ENCODE measurements at regions of chr21 and their contacts with region 1.

Region 1: GRCh38 chr21:35051287-35051818 is 2.3 kb upstream of the RUNX1 start:
- DNase-seq: peak; percentile 72
- H3K4me3 ChIP-seq: no peak overlapping the region
- H3K27ac ChIP-seq: no peak overlapping the region
- H3K4me1 ChIP-seq: peaks cover 43% of the 10 kb centered on the region
- H3K27me3 ChIP-seq: no peaks in the 10 kb centered on the region
- CTCF ChIP-seq: peak; percentile 71 to 74
- POLR2A ChIP-seq: no peak

Region 2: GRCh38 chr21:34693192-34693810 is 358.1 kb before region 1 on chr21:
- CTCF ChIA-PET with region 1: interaction called, 5 read pairs
- POLR2A ChIA-PET with region 1: no interaction called
- dilution Hi-C with region 1: no loop called
- intact Hi-C with region 1: loop called (anchors 5 kb)
- DNase-seq: peak; percentile 57
- H3K4me3 ChIP-seq: no peak overlapping the region
- H3K27ac ChIP-seq: no peak overlapping the region
- H3K4me1 ChIP-seq: no peaks in the 10 kb centered on the region
- H3K27me3 ChIP-seq: peaks cover 14 to 30% of the 10 kb centered on the region in 2 experiments
- CTCF ChIP-seq: peak; percentile 79 to 81
- POLR2A ChIP-seq: no peak

Region 3: DNA sequence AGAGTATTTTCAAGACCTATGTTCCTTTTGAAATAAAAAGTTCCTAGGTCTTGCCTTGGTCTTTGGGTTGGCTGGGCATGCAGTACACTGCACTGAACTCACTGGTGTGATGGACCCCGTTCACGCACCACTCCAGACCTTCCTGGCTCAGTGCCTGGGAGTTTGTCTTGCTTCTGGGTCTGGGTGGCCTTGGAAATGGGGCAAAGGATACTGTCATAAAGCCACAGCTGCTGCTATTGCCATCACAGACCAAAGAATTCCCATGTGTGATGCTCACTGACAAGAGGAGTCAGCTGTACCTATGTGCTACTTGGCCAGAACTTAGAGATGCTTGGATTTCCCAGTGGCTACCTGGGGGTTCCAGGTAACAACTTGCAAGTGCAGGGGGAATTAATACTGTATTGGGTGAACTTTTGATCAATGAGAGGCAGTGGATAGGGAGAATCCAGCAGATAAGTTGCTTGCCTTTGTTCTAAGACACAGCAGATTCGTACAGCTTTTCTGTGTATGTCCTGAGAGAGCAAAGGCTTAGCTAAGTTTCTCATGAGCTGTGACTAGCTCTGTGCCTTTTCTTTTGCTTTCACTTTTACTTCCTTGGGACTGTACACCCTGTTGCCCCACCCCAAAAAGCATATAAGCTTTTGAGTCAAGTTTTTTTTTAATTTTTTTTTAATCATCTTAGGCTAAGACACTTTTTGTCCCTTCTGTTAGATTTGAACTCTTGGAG is 117.6 kb before region 1 on chr21:
- CTCF ChIA-PET with region 1: no interaction called
- POLR2A ChIA-PET with region 1: no interaction called
- dilution Hi-C with region 1: no loop called
- intact Hi-C with region 1: no loop called
- DNase-seq: no peak
- H3K4me3 ChIP-seq: no peak overlapping the region
- H3K27ac ChIP-seq: no peak overlapping the region
- H3K4me1 ChIP-seq: peaks cover 11% of the 10 kb centered on the region
- H3K27me3 ChIP-seq: peaks cover 15 to 20% of the 10 kb centered on the region in 2 experiments
- CTCF ChIP-seq: no peak
- POLR2A ChIP-seq: no peak

Region 4: DNA sequence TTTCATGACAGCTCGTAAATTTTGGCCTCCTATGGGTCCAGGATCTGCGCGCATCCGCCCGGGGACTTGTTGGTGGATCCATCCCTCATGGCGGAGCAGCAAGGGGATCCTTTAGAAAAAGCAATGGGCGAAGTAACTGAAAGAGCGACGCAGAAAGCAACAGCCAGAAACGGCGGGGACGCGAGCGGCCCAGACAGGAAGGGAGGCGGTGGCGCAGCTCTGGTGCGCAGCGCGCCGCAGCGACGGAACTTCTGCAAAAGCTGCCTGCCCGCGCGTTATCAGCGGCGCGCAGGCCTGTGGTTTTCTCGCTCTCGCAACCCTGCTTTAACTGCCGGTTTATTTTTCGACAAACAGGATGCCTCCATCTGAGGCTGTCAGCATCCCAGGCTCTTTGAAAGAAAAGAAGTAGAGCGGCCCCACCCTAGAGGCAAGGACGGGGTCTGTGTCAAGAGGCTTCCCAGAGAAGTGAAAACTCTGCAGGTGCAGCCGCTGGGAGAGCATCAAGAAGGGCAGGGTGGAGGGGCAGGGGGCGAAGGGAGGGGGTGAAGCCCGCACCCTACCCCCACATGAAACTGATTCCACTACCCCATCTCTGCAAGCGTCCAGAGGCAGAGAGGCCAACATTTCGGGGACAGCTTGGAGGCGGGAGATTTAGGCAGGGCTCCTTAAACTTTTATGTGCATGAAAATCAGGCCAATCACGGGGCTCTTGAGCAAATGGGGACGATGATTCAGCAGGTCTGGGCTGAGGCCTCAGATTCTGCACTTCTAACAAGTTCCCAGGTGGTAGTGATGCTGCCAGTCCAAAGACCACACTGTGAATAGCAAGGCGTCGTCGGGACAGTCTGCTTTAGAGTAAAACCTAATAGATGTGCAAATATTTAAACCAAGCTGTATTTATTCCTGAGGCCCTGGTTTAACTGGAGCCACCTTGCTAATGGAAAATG is 24.5 kb before region 1 on chr21:
- CTCF ChIA-PET with region 1: interaction called, 6 read pairs
- POLR2A ChIA-PET with region 1: no interaction called
- dilution Hi-C with region 1: no loop called
- intact Hi-C with region 1: loop called (anchors 2 kb)
- DNase-seq: peak; percentile 11
- H3K4me3 ChIP-seq: peak overlapping the region in 2 of 3 experiments; percentile 21 to 35
- H3K27ac ChIP-seq: no peak overlapping the region
- H3K4me1 ChIP-seq: peaks cover 3% of the 10 kb centered on the region
- H3K27me3 ChIP-seq: peaks cover 26 to 31% of the 10 kb centered on the region in 2 experiments
- CTCF ChIP-seq: no peak
- POLR2A ChIP-seq: no peak

Region 5: DNA sequence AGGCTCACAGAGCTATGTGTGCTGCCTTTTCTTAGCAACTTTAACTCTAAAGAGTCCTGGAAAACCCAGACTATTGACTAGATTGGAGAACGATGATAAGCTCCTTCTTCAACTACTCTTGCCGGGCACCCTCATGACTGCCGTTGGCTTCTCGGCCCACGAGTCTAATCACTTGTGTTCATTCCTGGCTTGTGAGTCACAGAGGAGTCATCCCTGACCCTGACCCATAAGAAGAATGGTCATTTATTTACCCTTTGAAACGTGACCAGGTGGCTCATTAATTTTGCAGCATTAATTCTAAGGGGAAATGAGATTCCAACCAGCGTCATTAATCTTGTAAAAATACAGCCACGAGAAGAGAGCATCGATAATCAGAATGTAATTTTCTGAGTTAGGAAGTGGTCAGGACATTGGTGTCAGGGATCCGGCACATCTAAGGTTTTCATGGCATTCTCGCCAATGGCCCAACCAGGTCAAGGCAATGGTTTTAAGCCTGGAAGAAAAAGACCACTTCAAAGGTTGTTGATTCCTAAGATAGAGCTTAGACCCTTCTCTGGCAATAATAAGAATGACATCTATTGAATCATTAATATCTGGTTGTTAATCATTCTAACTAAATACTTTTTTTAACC is 181.3 kb after region 1 on chr21:
- CTCF ChIA-PET with region 1: interaction called, 3 read pairs
- POLR2A ChIA-PET with region 1: no interaction called
- dilution Hi-C with region 1: no loop called
- intact Hi-C with region 1: loop called (anchors 2 kb)
- DNase-seq: peak; percentile 93
- H3K4me3 ChIP-seq: no peak overlapping the region
- H3K27ac ChIP-seq: peak overlapping the region; percentile 70
- H3K4me1 ChIP-seq: peaks cover 19% of the 10 kb centered on the region
- H3K27me3 ChIP-seq: no peaks in the 10 kb centered on the region
- CTCF ChIP-seq: no peak
- POLR2A ChIP-seq: no peak

Region 6: GRCh38 chr21:35475768-35476167 is 424.4 kb after region 1 on chr21:
- CTCF ChIA-PET with region 1: no interaction called
- POLR2A ChIA-PET with region 1: no interaction called
- dilution Hi-C with region 1: no loop called
- intact Hi-C with region 1: loop called (anchors 10 kb)
- DNase-seq: peak; percentile 49
- H3K4me3 ChIP-seq: no peak overlapping the region
- H3K27ac ChIP-seq: peak overlapping the region; percentile 93
- H3K4me1 ChIP-seq: peaks cover 24% of the 10 kb centered on the region
- H3K27me3 ChIP-seq: no peaks in the 10 kb centered on the region
- CTCF ChIP-seq: no peak
- POLR2A ChIP-seq: no peak

Region 7: GRCh38 chr21:35932232-35932911 is 881.0 kb after region 1 on chr21:
- CTCF ChIA-PET with region 1: no interaction called
- POLR2A ChIA-PET with region 1: no interaction called
- dilution Hi-C with region 1: no loop called
- intact Hi-C with region 1: loop called (anchors 1 kb)
- DNase-seq: peak; percentile 95
- H3K4me3 ChIP-seq: peak overlapping the region in 1 of 3 experiments; percentile 21
- H3K27ac ChIP-seq: peak overlapping the region; percentile 87
- H3K4me1 ChIP-seq: peaks cover 26% of the 10 kb centered on the region
- H3K27me3 ChIP-seq: no peaks in the 10 kb centered on the region
- CTCF ChIP-seq: no peak
- POLR2A ChIP-seq: no peak

Measured in endothelial cell of umbilical vein (primary cell).